ENCODE measurements at regions of chr2 and their contacts with region 1.

Region 1: DNA sequence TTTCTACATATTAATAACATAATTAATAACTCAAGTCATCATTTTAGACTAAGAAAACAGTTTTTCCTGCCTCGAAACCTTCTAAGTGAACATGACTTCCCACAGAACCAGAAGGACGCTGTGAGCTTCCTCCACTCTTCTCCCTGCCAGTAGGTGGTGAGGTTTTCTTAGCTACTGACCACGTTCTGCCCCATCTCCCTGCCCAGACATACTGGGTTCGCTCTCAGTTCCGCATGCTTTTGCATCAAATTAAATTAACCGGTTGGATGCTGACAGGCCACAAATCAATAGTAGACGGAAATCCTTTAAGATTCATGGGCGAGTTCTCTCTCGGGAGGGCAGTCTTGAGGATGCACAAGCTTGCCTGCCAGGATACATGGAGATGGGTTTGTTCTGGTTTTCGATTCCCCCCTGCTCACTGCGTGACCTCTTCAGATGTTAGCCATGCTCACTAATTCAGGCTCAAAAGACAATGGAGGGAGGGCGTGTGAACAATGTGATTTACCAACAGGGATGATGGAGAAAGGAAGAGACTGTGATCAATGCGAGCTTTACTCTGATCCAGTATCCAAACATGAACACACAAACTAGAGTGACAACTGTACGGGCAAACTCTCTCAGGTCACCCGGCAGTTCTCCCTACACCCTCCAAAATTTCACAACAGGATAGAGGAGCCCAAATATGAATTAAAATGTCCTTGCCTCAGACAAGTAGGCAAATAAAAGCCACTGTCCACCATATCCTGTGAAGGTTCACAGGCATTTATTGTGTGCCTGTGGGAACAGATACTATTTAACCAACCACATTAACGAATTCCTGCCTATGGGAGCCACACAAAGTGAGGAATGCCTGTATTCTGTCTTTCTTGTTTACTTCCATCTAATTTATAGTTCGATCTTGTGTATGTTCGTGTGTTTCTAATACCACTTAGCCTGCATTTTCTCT is 375.7 kb downstream of the EIPR1 start:
- DNase-seq: no peak
- ATAC-seq: peak in 4 of 8 donors; percentile 52 to 68 (median 66)
- H3K4me3 ChIP-seq: no peak overlapping the region
- H3K27ac ChIP-seq: no peak overlapping the region
- H3K4me1 ChIP-seq: no peaks in the 10 kb centered on the region
- H3K27me3 ChIP-seq: peaks cover 0 to 24% (median 13%) of the 10 kb centered on the region in 7 donors
- CTCF ChIP-seq: peak in 8 of 9 donors; percentile 9 to 58 (median 46)

Region 2: DNA sequence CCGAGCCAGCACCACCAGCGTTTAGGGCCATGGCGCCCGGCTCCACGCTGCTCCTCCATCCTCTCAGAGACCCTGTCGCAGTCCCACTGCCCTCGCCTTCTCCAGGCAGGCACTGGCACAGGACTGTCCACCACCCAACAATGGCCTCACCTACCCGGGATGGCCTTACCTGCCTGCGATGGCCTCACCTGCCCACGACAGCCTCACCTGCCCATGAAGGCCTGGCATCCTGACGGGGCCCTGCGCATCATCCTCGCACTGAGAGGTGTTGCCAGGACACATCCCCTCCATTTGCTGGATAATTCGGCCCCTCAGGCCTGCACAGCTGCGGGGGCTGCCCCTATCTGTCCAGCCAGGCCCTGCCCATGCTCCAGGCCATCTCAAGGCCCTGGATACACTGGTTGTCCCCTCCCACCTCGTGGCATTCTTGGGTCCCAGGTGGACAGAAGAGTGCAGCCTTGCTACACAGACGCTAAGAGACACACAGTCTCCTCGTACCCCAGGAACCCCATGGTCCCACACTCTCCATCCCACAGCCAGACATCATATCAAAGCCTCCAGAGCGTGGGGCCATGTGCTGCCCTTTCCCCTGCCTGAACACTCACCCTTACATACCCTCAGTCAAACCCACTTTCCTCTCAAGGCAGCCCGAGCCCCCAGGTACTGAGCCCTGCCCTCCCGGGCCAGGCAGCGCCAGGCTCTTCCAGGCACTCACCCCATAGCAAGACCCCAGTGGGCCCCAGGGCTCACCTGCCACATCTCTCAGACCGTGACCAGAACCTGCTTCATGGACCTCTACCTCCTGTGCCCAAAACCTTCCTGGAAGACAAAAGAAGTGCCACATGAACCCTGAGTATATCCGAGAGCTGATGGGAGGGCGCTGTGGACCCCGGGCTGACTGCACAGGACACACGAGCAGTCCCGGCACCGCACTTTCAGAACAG is 107.1 kb after region 1 on chr2:
- intact Hi-C with region 1: no loop called
- DNase-seq: no peak
- ATAC-seq: no peak
- H3K4me3 ChIP-seq: no peak overlapping the region
- H3K27ac ChIP-seq: no peak overlapping the region
- H3K4me1 ChIP-seq: no peaks in the 10 kb centered on the region
- H3K27me3 ChIP-seq: peaks cover 0 to 12% (median 0%) of the 10 kb centered on the region in 7 donors
- CTCF ChIP-seq: no peak

Region 3: DNA sequence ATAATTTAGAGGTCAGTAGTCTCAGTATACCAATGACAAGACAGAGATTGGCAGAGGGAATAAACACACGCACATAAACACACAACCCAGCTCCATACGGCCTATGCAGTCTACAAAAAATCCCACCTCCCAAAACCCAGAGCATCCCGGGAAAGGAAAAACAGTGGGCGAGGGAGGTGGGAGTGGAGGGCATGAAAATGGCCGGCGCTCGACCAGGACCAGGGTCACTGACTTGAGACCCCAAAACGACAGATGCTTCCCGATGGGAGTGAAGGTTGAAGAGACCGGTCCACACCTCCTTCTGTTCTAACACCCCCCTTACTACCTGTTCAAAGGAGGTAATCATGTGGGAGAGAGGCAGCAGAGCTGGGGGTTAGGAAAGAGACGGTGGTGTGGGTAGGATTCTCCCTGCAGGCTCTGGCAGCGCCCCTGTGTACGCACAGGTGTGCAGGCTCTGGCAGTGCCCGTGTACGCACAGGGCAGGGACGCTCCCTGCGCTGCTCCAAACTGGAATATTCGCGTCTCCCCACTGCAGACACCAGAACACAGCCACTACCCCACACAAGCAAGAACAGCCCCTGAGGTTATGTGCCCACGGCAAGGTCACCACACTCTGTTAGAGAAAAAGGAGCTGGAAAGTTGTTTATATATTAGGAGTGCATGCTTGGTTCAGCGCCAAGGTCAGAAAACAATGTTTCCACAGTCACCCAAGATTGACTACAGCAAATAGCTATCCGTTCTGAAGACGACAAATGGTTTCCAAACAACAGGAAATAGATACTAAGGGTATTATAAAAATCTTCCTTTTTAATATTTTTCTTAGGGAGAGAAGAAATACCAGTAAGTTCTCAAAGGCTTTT is 307.8 kb after region 1 on chr2:
- intact Hi-C with region 1: loop called in 3 of 10 experiments (anchors 5 to 10 kb)
- DNase-seq: no peak
- ATAC-seq: no peak
- H3K4me3 ChIP-seq: no peak overlapping the region
- H3K27ac ChIP-seq: no peak overlapping the region
- H3K4me1 ChIP-seq: peaks cover 0 to 4% (median 0%) of the 10 kb centered on the region in 9 donors
- H3K27me3 ChIP-seq: no peaks in the 10 kb centered on the region
- CTCF ChIP-seq: no peak

Measured in heart right ventricle (tissue), 16 donors.